ENCODE measurements at regions of chr5 and their contacts with region 1.

Region 1: GRCh38 chr5:43313035-43313853 is at the start of gene HMGCS1:
- DNase-seq: peak; percentile 94 to 99 (median 99)
- ATAC-seq: peak; percentile 93
- H3K4me3 ChIP-seq: peak within 1 kb of the TSS; percentile 89
- H3K4me3 Mint-ChIP-seq: peak within 1 kb of the TSS; percentile 82 to 99 (median 94)
- H3K27ac ChIP-seq: peak within 1 kb of the TSS; percentile 95
- H3K27ac Mint-ChIP-seq: peak within 1 kb of the TSS; percentile 81 to 98 (median 94)
- H3K4me1 ChIP-seq: peaks cover 9 to 12% of the 10 kb centered on the region in 2 donors
- H3K4me1 Mint-ChIP-seq: peaks cover 19 to 63% (median 39%) of the 10 kb centered on the region in 7 donors
- H3K27me3 ChIP-seq: no peaks in the 10 kb centered on the region
- H3K27me3 Mint-ChIP-seq: peaks cover 0 to 2% (median 0%) of the 10 kb centered on the region in 5 donors
- total RNA-seq, gene HMGCS1: 32.2 to 77.5 (median 48.2) TPM

Region 2: DNA sequence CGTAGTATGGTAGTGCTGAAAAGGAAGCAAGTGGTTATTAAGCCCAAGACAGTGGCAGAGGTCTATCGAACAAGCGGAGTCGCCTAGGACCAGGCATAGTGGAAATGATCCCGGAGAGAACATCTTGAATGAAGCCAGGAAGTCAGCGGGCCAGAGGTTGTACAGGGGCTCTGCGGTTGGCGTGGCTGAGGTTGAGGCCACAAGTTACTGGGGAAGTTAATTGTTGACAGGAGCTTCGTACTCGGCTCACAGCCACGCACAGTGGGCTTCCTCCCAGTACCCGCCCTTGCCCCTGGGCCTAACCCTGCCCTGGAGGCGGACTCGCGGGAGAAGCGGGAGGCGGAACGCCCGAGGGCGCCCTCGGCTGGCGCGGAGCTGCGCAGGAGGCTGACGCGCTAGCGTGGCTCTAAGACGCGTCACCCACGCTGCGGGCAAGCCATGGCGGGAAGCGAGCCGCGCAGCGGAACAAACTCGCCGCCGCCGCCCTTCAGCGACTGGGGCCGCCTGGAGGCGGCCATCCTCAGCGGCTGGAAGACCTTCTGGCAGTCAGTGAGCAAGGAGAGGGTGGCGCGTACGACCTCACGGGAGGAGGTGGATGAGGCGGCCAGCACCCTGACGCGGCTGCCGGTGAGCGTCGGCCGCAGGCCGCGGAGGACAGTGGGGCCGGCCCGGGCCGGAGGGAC is 1388.2 kb before region 1 on chr5 and contains the start of gene FBXO4:
- CTCF ChIA-PET with region 1: no interaction called
- POLR2A ChIA-PET with region 1: no interaction called
- intact Hi-C with region 1: loop called in 1 of 2 experiments (anchors 5 kb)
- DNase-seq: peak; percentile 79 to 92 (median 88)
- ATAC-seq: peak; percentile 97
- H3K4me3 ChIP-seq: peak within 1 kb of the TSS; percentile 85
- H3K4me3 Mint-ChIP-seq: peak within 1 kb of the TSS; percentile 83 to 93 (median 88)
- H3K27ac ChIP-seq: peak within 1 kb of the TSS; percentile 96
- H3K27ac Mint-ChIP-seq: peak within 1 kb of the TSS; percentile 93 to 100 (median 97)
- H3K4me1 ChIP-seq: peaks cover 6 to 14% of the 10 kb centered on the region in 2 donors
- H3K4me1 Mint-ChIP-seq: peaks cover 9 to 43% (median 25%) of the 10 kb centered on the region in 7 donors
- H3K27me3 ChIP-seq: no peaks in the 10 kb centered on the region
- H3K27me3 Mint-ChIP-seq: no peaks in the 10 kb centered on the region
- total RNA-seq, gene FBXO4: 10.9 to 15.0 (median 14.6) TPM

Region 3: DNA sequence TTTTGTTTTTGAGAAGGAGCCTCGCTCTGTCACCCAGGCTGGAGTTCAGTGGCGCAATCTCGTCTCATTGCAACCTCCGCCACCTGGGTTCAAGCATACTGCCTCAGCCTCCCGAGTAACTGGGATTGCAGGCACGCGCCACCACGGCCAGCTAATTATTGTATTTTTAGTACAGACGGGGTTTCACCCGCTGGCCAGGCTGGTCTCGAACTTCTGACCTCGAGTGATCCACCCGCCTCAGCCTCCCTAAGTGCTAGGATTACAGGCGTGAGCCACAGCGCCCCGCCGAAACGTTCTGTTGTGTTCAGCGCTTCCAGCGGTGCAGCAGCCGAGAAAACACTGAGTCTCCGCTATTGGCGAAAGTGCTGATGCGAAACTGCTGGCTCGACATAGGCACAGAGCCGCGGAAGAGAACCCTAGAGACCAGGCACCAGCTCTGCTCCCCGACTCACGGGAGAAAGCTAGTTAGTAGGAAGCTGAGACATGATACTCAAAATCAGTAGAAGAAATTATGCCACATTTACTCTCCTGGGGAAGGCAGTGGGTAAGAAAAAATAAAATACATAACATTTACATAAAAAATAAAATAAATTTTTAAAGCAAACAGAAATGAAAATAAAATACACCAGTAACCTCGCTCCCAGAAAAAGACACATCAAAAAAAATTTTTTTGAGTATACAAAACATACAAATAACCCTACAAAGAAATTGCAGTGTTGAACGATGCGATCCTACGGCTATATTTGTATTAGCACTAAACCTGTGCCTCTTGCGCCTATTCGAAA is 304.7 kb before region 1 on chr5:
- CTCF ChIA-PET with region 1: no interaction called
- POLR2A ChIA-PET with region 1: interaction called, 14 read pairs
- intact Hi-C with region 1: loop called (anchors 2 kb)
- DNase-seq: peak; percentile 79 to 95 (median 90)
- ATAC-seq: peak; percentile 78
- H3K4me3 ChIP-seq: peak overlapping the region; percentile 72
- H3K4me3 Mint-ChIP-seq: peak overlapping the region; percentile 85 to 98 (median 92)
- H3K27ac ChIP-seq: peak overlapping the region; percentile 92
- H3K27ac Mint-ChIP-seq: peak overlapping the region; percentile 96 to 100 (median 98)
- H3K4me1 ChIP-seq: peaks cover 22 to 24% of the 10 kb centered on the region in 2 donors
- H3K4me1 Mint-ChIP-seq: peaks cover 17 to 47% (median 29%) of the 10 kb centered on the region in 7 donors
- H3K27me3 ChIP-seq: no peaks in the 10 kb centered on the region
- H3K27me3 Mint-ChIP-seq: peaks cover 0 to 4% (median 0%) of the 10 kb centered on the region in 5 donors

Region 4: DNA sequence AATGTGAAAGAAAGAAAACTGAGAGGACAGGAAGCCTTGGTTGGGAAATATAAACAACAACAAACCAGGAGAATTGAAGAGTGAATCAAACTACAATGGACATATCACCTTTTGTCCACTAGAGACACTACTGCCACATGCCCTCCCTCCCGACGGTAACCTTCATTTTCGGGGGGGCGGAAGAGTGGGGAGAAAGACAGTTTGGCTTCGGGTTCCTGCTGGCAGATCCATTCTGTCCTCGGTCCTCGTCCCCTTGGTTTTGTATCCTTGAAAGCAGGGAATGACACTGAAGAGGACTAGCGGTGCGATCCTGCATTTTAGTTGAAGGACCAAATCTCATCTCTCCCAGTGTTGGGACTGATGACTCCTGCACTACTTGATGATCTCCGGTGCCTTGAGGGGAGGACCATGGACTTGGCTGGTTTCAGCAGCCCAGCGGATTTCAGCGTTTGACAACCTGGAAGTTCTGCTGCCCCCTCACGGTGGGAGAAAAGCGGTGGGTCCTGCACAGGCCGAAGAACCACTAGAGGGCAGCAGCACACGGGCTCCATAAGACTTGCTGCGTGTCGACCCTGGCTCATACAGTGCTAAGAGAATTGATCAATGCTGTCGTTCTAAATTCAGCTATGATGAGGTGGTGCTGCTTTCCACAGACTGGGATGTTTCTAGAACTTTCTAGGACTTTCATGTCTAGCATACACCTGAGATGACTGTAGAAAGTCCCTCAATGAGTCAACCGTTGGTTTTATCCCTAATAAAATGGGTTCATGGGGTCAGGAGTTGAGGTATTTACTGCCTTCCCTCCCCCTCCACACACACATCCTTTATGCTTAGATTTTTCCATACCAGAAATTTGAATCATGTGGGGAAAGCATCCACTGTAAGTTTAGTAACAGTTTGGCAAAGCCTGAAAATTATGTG is 207.6 kb before region 1 on chr5:
- CTCF ChIA-PET with region 1: interaction called, 4 read pairs
- POLR2A ChIA-PET with region 1: interaction called, 6 read pairs
- intact Hi-C with region 1: loop called (anchors 1 kb)
- DNase-seq: peak; percentile 75 to 90 (median 85)
- ATAC-seq: peak; percentile 99
- H3K4me3 ChIP-seq: peak overlapping the region; percentile 66
- H3K4me3 Mint-ChIP-seq: peak overlapping the region; percentile 77 to 93 (median 89)
- H3K27ac ChIP-seq: peak overlapping the region; percentile 59
- H3K27ac Mint-ChIP-seq: peak overlapping the region; percentile 43 to 92 (median 88)
- H3K4me1 ChIP-seq: peaks cover 6 to 22% of the 10 kb centered on the region in 2 donors
- H3K4me1 Mint-ChIP-seq: peaks cover 21 to 49% (median 38%) of the 10 kb centered on the region in 7 donors
- H3K27me3 ChIP-seq: no peaks in the 10 kb centered on the region
- H3K27me3 Mint-ChIP-seq: no peaks in the 10 kb centered on the region

Region 5: GRCh38 chr5:43396762-43397304 is 83.6 kb after region 1 on chr5:
- CTCF ChIA-PET with region 1: no interaction called
- POLR2A ChIA-PET with region 1: interaction called, 12 read pairs
- intact Hi-C with region 1: loop called in 1 of 2 experiments (anchors 1 kb)
- DNase-seq: peak; percentile 42 to 74 (median 66)
- ATAC-seq: peak; percentile 96
- H3K4me3 ChIP-seq: peak overlapping the region; percentile 80
- H3K4me3 Mint-ChIP-seq: peak overlapping the region; percentile 88 to 100 (median 98)
- H3K27ac ChIP-seq: peak overlapping the region; percentile 76
- H3K27ac Mint-ChIP-seq: peak overlapping the region; percentile 93 to 99 (median 97)
- H3K4me1 ChIP-seq: peaks cover 3 to 7% of the 10 kb centered on the region in 2 donors
- H3K4me1 Mint-ChIP-seq: peaks cover 15 to 62% (median 41%) of the 10 kb centered on the region in 7 donors
- H3K27me3 ChIP-seq: no peaks in the 10 kb centered on the region
- H3K27me3 Mint-ChIP-seq: no peaks in the 10 kb centered on the region

Region 6: DNA sequence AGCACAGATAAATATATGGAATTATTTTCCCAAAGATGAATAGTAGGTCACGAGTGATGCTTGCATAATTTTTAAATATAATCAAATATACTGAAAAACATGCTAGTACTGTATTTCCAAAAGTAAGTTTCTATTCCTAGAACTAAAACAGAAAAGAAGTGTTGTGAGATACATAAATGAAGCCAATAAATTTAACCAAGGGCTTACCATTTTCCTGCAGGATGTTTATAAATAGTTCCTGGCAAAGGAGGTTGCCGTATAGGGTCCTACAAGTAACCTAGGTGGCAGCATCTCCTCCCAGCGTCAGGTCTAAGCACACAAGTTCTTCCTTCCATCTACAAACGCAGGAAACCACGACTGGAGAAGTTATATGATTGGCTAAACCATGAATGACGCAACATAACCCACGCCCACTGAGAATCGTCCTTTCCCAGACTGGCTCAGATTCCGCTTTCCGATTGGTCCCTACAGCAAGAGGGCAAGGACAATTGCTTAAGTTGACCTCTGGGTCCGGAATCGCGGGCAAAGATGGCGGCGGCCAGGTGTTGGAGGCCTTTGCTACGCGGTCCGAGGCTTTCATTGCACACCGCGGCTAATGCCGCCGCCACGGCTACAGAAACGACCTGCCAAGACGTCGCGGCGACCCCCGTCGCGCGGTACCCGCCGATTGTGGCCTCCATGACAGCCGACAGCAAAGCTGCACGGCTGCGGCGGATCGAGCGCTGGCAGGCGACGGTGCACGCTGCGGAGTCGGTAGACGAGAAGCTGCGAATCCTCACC is 1495.4 kb after region 1 on chr5 and contains the start of gene MRPS30:
- CTCF ChIA-PET with region 1: no interaction called
- POLR2A ChIA-PET with region 1: no interaction called
- intact Hi-C with region 1: loop called (anchors 1 to 2 kb)
- DNase-seq: peak; percentile 65 to 96 (median 94)
- ATAC-seq: peak; percentile 98
- H3K4me3 ChIP-seq: peak within 1 kb of the TSS; percentile 85
- H3K4me3 Mint-ChIP-seq: peak within 1 kb of the TSS; percentile 86 to 98 (median 96)
- H3K27ac ChIP-seq: peak within 1 kb of the TSS; percentile 81
- H3K27ac Mint-ChIP-seq: peak within 1 kb of the TSS; percentile 84 to 98 (median 95)
- H3K4me1 ChIP-seq: peaks cover 0 to 20% of the 10 kb centered on the region in 2 donors
- H3K4me1 Mint-ChIP-seq: peaks cover 12 to 53% (median 36%) of the 10 kb centered on the region in 7 donors
- H3K27me3 ChIP-seq: no peaks in the 10 kb centered on the region
- H3K27me3 Mint-ChIP-seq: peaks cover 0 to 5% (median 3%) of the 10 kb centered on the region in 5 donors
- total RNA-seq, gene MRPS30: 31.1 to 61.0 (median 47.1) TPM